ENCODE measurements at regions of chr1 and their contacts with region 1.

Region 1: DNA sequence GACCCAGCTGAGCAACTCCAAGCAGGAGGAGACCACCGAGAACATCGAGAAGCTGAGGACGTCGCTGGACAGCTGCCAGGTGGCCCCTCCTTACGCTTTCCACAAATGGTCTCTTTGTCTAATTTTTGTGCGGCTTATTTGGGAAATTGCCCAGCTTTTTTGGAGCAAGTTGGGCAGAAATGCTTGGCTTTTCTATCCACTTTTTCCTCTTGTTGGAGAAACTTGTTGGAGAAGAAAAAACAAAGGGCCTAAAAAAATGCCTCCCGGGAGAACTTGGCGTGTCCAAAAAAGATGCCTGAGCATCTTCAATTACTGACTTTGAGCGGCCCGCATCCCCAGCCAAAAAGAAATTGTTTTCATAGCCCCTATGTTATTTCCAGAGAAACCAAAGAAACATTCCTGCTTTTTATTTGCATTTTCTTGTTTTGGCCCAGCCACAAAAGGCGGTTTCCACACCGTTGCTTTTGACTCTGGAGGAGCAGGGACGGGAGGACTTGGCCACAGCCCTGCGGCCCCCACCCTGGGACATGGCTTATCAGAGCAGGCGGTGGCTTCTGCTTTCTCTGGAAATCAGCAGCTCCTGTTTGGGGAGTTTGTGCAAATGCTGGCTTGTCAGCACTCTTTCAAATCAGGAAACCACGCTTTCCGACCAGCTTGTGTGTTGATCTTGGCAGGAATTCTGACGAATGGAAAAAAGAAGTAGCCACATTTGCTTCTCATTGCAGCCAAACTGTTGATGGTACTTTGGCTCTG is 81.2 kb upstream of the EFHD2 start:
- DNase-seq: peak in 3 of 4 donors; percentile 72 to 80 (median 76)
- ATAC-seq: peak; percentile 65
- H3K4me3 ChIP-seq: no peak overlapping the region
- H3K27ac ChIP-seq: peak overlapping the region in 1 of 2 donors; percentile 13
- H3K4me1 ChIP-seq: peaks cover 10 to 17% of the 10 kb centered on the region in 2 donors
- H3K27me3 ChIP-seq: peaks cover 0 to 35% of the 10 kb centered on the region in 2 donors
- CTCF ChIP-seq: no peak

Region 2: GRCh38 chr1:15430787-15431570 is 102.5 kb after region 1 on chr1:
- intact Hi-C with region 1: loop called in 1 of 2 experiments (anchors 5 kb)
- DNase-seq: peak in 3 of 4 donors; percentile 62 to 92 (median 68)
- ATAC-seq: peak; percentile 81
- H3K4me3 ChIP-seq: no peak overlapping the region
- H3K27ac ChIP-seq: no peak overlapping the region
- H3K4me1 ChIP-seq: peaks cover 0 to 58% of the 10 kb centered on the region in 2 donors
- H3K27me3 ChIP-seq: no peaks in the 10 kb centered on the region
- CTCF ChIP-seq: peak; percentile 93 to 98

Region 3: DNA sequence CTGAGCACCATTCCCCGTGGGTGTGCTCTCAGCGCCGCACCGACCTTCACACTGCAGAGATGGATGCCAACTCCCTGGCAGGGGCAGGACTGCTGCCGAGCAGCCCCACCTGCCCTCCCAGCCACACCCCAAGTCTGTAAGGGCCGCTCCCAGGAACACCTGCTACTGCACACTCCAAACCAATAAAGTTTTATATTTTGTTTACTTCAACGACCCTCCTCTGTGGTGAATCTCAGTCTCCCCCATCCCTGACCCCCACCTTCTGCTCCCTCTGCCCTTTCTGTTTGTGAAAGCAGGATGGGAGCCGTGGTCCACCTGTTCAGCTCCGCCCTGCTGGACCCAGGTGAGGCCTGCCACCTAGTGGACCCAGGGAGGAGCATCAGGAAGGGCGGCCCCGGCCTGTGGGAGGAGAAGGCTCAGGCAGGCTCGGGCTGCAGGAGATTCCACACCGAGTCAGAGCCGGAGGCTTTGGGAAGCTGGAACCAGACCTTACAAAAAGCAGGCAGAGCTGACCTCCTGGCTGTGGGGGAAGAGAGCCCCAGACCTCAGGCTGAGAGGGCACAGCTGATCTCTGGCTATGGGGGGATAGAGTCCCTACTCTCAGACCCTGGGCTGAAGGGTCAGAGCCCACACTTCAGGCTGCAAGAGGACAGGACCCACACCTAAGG is 412.8 kb after region 1 on chr1:
- intact Hi-C with region 1: no loop called
- DNase-seq: peak; percentile 49 to 92 (median 82)
- ATAC-seq: peak; percentile 97
- H3K4me3 ChIP-seq: no peak overlapping the region
- H3K27ac ChIP-seq: no peak overlapping the region
- H3K4me1 ChIP-seq: peaks cover 4 to 9% of the 10 kb centered on the region in 2 donors
- H3K27me3 ChIP-seq: no peaks in the 10 kb centered on the region
- CTCF ChIP-seq: peak; percentile 73 to 75